ENCODE measurements at regions of chr15 and their contacts with region 1.

Region 1: DNA sequence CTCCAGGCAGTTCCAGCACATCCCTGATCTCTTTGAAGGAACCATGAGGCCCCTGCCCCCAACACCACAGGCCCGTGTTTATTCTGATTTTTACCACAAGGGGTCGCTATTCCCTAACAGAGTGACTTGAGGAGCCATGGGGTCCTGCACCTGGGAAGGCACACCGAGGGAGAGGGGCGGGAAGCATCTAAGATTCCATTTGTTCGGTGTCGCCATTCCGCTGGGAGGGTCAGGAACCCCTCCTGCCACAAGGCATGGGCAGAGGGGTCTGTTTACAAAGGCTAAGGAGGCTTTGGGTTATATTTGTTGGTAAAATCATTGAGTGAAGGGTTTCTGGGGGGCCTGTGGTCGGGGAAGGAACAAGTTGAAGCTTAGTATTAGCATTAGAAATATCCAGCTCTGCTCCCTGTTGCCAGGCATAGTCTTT is 77.1 kb downstream of the WDR76 start:
- DNase-seq: peak; percentile 53
- H3K4me3 ChIP-seq: no peak overlapping the region
- H3K27ac ChIP-seq: no peak overlapping the region
- H3K4me1 ChIP-seq: no peaks in the 10 kb centered on the region
- H3K27me3 ChIP-seq: no peaks in the 10 kb centered on the region
- CTCF ChIP-seq: peak; percentile 70

Region 2: DNA sequence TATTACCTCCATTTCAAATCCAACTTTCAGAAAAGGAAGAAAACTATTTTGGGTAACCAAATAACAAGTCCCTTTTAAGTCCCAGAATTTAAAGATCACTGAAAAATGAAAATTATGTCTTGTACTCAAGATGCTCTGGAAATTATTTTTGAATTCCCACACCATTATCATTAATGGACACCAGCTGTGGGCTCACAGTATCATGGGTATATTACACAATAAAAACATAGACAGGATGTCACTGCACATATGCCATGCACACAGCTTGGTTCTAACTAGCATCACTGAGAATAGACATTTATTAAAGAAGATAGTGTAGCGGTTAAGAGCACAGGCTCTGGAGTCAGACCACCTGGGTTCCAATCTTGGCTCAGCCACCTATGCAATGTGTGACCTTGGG is 160.8 kb after region 1 on chr15:
- intact Hi-C with region 1: loop called (anchors 2 kb)
- DNase-seq: no peak
- H3K4me3 ChIP-seq: no peak overlapping the region
- H3K27ac ChIP-seq: no peak overlapping the region
- H3K4me1 ChIP-seq: no peaks in the 10 kb centered on the region
- H3K27me3 ChIP-seq: no peaks in the 10 kb centered on the region
- CTCF ChIP-seq: no peak

Region 3: DNA sequence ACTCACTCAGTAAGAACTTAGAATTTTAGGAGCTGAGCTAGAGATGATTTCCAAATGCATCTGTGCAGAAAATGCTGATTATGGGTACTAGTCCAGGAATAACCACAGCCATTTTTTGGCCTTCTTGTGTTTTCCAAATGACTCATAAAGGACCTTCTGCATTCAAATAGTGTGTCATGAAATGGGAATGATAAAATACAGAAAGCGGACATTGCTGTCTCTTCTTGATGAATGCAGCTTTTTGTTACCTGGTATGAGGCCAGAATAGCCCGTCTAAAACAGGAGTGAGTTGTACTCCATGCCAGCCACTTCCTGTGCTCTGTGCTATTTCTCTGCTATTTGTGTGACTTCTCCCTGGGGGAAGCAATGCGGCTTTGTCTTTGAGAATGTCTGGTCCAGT is 311.7 kb after region 1 on chr15:
- intact Hi-C with region 1: loop called (anchors 10 kb)
- DNase-seq: no peak
- H3K4me3 ChIP-seq: no peak overlapping the region
- H3K27ac ChIP-seq: no peak overlapping the region
- H3K4me1 ChIP-seq: no peaks in the 10 kb centered on the region
- H3K27me3 ChIP-seq: no peaks in the 10 kb centered on the region
- CTCF ChIP-seq: no peak